RWPE1 (cell line): ENCODE measurements at regions of chr12 and their contacts with region 1.

Region 1: GRCh38 chr12:56518570-56518969 is 3.0 kb upstream of the RBMS2 start:
- DNase-seq: no peak
- H3K27ac ChIP-seq: peak overlapping the region; percentile 55
- CTCF ChIP-seq: no peak

Region 2: GRCh38 chr12:56574210-56574609 is 55.6 kb after region 1 on chr12:
- CTCF ChIA-PET with region 1: interaction called, 16 read pairs
- POLR2A ChIA-PET with region 1: no interaction called
- DNase-seq: no peak
- H3K27ac ChIP-seq: peak overlapping the region; percentile 53; the same call in 1 of the 2 replicates
- CTCF ChIP-seq: no peak